ENCODE measurements at regions of chr3 and their contacts with region 1.

Region 1: GRCh38 chr3:134212906-134213665 is 37.6 kb downstream of the RYK start:
- DNase-seq: peak; percentile 73
- H3K4me3 ChIP-seq: no peak overlapping the region
- H3K27ac ChIP-seq: no peak overlapping the region
- H3K4me1 ChIP-seq: no peaks in the 10 kb centered on the region
- CTCF ChIP-seq: peak; percentile 97

Region 2: GRCh38 chr3:133672461-133672860 is 540.6 kb before region 1 on chr3:
- CTCF ChIA-PET with region 1: no interaction called
- POLR2A ChIA-PET with region 1: interaction called, 10 read pairs
- intact Hi-C with region 1: no loop called
- DNase-seq: no peak
- H3K4me3 ChIP-seq: no peak overlapping the region
- H3K27ac ChIP-seq: no peak overlapping the region
- H3K4me1 ChIP-seq: peaks cover 15% of the 10 kb centered on the region
- CTCF ChIP-seq: no peak

Region 3: DNA sequence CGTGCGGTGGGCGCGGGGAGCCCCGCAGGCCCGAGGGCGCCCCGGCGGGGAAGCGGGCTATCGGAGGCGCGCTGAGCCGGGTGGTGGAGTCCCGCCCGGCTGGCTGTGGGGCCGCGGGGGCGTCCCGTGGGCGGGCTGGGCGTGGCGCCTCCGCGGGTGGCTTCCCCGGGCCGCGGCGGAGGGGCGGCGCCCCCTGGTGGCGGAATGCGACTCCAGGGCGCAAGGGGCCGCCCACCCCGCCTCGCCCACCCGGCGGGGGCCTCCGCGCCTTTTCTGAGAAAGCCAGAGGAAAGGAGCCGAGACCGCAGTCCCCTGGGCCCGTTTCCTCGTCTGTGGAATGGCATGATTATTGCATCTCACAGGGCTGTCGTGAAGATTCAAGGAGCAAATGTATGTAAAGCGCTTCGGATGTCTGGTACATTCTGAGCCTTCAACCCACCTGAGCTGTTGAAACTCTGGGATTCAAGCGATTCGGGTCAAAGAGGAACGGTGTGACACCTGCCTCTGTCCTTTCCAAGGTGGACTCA is 285.5 kb before region 1 on chr3:
- CTCF ChIA-PET with region 1: no interaction called
- POLR2A ChIA-PET with region 1: no interaction called
- intact Hi-C with region 1: loop called (anchors 10 kb)
- DNase-seq: peak; percentile 45
- H3K4me3 ChIP-seq: no peak overlapping the region
- H3K27ac ChIP-seq: no peak overlapping the region
- H3K4me1 ChIP-seq: no peaks in the 10 kb centered on the region
- CTCF ChIP-seq: peak; percentile 72

Region 4: DNA sequence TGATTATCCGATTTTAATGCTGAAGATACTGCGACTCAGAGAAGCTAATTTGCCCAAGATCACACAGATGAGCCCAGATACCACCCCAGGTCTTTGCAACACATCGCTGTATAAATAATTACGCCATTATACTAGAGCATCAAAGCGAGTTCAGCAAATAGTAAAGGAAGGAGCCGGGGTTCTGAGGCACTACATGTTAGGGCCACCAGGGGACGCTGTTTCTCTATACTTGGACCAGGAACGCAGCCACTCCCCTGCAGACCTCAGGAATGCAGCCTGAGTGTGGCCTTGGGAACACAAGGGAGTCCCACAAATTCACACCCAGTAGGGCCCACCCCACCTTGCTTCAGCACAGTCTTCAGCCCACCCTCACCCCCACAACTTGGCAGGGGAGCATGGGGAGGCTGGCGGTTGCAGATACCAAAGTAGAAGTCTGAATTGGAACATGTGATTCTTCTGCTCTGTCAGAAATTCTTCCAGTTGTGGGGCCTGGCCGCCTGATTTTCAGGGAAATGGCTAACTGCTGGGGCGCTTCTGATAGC is 95.3 kb after region 1 on chr3:
- CTCF ChIA-PET with region 1: no interaction called
- POLR2A ChIA-PET with region 1: no interaction called
- intact Hi-C with region 1: loop called (anchors 5 kb)
- DNase-seq: peak; percentile 72
- H3K4me3 ChIP-seq: no peak overlapping the region
- H3K27ac ChIP-seq: no peak overlapping the region
- H3K4me1 ChIP-seq: no peaks in the 10 kb centered on the region
- CTCF ChIP-seq: peak; percentile 99

Region 5: DNA sequence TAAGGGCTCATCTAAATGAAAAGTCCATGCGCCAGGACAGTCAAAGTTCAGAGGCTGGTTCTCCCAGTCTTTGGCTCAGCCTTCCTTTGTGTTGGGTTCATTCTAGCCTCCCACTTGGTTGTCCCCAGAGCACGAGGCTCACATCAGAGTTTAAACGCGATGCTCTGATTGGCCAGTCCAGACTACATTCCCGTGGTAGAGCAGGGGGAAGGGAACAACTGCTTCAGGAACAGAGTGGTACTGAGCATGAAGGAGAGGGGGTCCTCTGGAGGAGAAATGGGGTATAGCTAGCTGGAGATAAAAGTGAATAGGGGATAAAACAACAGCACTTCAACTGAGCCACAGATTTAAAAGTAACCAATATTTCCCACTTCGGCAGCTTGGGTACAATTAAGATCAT is 240.5 kb after region 1 on chr3:
- CTCF ChIA-PET with region 1: no interaction called
- POLR2A ChIA-PET with region 1: no interaction called
- intact Hi-C with region 1: no loop called
- DNase-seq: no peak
- H3K4me3 ChIP-seq: no peak overlapping the region
- H3K27ac ChIP-seq: no peak overlapping the region
- H3K4me1 ChIP-seq: peaks cover 8% of the 10 kb centered on the region
- CTCF ChIP-seq: peak; percentile 70

Region 6: DNA sequence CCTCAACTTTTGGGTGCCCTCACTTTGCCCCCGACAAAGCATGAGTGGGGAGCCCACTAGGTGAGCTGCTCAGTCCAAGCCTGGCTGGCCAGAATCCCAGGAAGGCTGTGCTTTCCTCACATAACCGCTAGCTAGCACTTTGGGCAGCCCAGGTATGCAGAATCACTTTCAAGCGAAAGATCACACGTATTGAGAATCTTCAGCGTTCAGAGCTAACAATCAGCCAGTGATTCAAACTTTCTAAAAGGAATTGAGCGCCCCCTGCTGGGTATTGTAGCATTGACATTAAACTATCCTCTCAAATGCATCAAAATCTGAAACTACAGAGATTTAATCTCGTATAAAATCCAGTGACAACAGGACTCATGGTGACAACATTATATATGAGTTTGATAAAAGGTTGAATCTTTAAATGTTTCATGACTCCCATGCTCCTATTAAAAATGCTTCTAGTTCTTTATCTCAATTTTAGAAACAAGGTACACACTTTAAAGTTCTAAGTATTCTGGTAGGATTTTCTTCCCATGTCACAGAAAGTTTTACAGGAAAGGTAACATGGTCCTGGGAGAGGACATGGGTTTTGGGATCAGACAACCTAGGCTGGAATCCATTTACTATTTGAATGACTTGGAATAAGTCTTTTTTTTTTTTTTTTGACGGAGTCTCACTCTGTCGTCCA is 260.9 kb after region 1 on chr3:
- CTCF ChIA-PET with region 1: no interaction called
- POLR2A ChIA-PET with region 1: interaction called, 3 read pairs
- intact Hi-C with region 1: loop called (anchors 2 kb)
- DNase-seq: peak; percentile 80
- H3K4me3 ChIP-seq: no peak overlapping the region
- H3K27ac ChIP-seq: no peak overlapping the region
- H3K4me1 ChIP-seq: no peaks in the 10 kb centered on the region
- CTCF ChIP-seq: peak; percentile 94